Lower lobe of right lung (tissue), 2 donors: ENCODE measurements at regions of chr4 and their contacts with region 1.

Region 1: DNA sequence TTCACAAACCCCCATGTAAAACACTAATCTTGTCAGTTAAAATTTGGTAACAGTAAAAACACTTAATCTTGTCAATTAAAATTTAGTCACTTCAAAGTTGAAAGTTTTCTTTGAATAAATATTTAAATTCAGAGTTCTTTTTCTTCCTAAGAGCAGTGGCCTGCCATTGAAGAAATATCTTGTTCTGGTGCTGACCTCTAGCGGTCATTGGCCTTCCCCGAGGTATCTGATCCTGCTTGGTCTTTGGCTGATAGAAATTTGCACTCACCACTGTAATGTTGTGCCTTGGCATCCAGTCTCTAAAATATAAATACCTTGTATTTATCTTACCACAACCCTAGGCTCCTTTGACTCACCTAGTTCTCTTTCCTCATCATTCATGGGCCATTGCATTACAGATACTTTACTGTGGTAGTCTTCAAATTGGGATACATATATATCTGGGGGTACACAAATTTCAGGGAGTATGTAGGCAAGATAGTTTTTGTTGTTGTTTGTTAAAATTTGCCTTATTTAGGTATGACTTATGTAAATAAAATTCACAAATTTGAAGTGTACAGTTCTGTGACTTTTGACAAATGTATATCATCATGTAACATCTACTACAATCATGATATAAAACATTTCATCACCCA is 6.7 kb upstream of the ART3 start:
- DNase-seq: peak; percentile 54
- ATAC-seq: peak; percentile 74 to 87
- H3K4me3 ChIP-seq: no peak overlapping the region
- H3K27ac ChIP-seq: no peak overlapping the region
- H3K4me1 ChIP-seq: no peaks in the 10 kb centered on the region
- H3K27me3 ChIP-seq: no peaks in the 10 kb centered on the region
- CTCF ChIP-seq: peak; percentile 90

Region 2: DNA sequence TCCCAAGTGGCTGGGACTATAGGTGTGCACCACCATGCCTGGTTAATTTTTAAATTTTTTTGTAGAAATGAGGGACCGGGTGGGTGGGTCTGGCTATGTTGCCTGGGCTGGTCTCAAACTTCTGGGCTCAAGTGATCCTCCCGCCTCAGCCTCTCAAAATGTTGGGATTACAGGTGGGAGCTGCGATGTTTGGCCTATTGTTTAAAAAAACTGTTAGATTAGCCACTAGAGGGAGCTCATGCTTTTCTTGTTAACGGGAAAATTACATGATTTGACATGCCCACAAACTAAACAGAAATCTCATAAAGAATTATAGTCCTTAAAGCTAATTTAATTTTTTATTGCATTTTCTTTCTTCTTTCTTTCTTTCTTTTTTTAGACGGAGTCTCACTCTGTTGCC is 72.0 kb before region 1 on chr4:
- intact Hi-C with region 1: loop called (anchors 10 kb)
- DNase-seq: no peak
- ATAC-seq: peak in 1 of 2 donors; percentile 48
- H3K4me3 ChIP-seq: no peak overlapping the region
- H3K27ac ChIP-seq: no peak overlapping the region
- H3K4me1 ChIP-seq: peaks cover 4% of the 10 kb centered on the region
- H3K27me3 ChIP-seq: no peaks in the 10 kb centered on the region
- CTCF ChIP-seq: peak; percentile 66